Adrenal gland (tissue), 19 donors: ENCODE measurements at regions of chr20 and their contacts with region 1.

Region 1: GRCh38 chr20:2172305-2173175 is 70.9 kb downstream of the STK35 start:
- DNase-seq: peak; percentile 62 to 91 (median 78)
- H3K4me3 ChIP-seq: no peak overlapping the region
- H3K27ac ChIP-seq: no peak overlapping the region
- H3K4me1 ChIP-seq: no peaks in the 10 kb centered on the region
- H3K27me3 ChIP-seq: no peaks in the 10 kb centered on the region
- CTCF ChIP-seq: peak; percentile 77 to 96 (median 90)
- POLR2A ChIP-seq: no peak

Region 2: DNA sequence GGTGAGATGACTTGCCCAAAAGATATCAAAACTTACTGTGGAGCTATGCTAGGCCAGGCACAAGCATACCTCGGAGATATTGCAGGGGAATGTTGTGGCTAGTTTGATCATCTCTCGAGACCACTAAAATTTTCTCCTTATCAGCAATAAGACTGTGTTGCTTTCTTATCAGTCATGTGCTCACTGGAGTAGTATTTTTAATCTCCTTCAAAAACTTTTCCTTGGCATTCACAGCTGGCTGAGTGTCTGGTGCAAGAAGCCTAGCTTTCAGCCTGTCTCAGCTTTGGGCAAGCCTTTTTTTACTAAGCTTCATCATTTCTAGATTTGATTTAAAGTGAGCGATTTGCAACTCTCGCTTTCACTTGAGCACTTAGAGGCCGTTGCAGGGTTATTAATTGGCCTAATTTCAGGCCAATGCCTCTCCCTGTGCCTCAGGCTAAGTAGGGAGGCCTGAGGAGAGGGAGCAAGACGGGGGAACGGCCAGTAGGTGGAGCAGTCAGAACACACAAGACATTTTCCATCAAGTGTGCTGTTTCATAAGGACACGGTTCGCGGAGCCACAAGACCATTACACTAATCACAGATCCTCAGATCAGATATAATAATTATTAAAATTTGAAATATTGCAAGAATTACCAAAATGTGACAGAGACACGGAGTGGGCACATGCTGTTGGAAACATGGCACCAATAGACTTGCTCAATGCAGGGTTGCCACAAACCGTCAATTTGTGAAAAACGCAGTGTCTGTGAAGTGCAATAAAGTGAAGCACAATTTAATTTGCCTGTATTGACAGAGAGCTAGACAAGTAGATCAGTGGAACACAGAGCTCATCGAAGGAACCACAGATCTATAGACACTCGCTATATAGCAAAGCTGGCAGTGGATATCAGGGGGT is 408.2 kb before region 1 on chr20:
- intact Hi-C with region 1: loop called in 1 of 2 experiments (anchors 10 kb)
- DNase-seq: peak; percentile 80 to 94 (median 86)
- H3K4me3 ChIP-seq: no peak overlapping the region
- H3K27ac ChIP-seq: no peak overlapping the region
- H3K4me1 ChIP-seq: peaks cover 0 to 7% of the 10 kb centered on the region in 2 donors
- H3K27me3 ChIP-seq: no peaks in the 10 kb centered on the region
- CTCF ChIP-seq: peak; percentile 54 to 91 (median 78)
- POLR2A ChIP-seq: no peak

Region 3: DNA sequence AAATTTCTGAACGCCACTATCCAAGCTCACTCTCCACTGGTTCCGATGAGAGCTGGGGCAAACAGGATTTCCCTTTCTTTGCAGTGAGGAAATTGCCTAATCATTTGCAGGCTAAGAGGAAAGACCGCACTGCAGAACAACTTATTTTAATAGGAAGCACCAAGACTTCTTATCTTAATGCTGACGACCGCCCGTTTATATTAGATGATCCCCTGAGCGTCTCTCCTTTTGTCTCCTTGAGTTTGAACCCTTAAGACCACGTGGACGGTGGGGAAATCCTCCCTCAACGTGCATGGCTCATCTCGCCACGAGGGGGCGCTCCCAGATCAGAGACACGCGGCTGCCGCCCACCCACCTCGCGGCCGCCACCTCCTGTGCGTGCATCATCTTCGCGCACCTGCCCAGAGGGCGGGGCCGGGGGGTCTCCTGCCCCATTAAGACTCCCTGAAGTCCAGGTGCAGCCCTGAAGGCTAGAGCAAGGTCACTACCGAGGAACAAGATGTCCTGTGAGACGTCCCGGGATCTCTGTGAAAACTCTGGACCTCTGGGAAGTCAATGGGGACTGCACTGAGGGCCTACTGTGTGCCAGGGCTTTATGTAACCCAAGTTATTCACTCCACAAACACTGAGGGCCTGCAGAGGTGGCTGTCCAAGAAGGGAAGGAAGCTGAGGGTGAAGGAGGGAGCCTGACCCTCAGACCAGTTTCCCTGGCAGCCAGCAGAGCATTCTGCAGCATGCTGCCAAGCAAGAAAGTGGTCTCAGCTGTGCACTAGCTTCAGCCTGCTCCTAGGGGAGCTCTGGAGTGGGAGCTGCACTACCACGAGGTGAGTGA is 206.8 kb before region 1 on chr20:
- intact Hi-C with region 1: loop called (anchors 5 kb)
- DNase-seq: peak; percentile 65 to 91 (median 77)
- H3K4me3 ChIP-seq: peak overlapping the region in 1 of 4 donors; percentile 9
- H3K27ac ChIP-seq: no peak overlapping the region
- H3K4me1 ChIP-seq: peaks cover 0 to 17% of the 10 kb centered on the region in 2 donors
- H3K27me3 ChIP-seq: no peaks in the 10 kb centered on the region
- CTCF ChIP-seq: peak; percentile 84 to 93 (median 89)
- POLR2A ChIP-seq: no peak

Region 4: GRCh38 chr20:2005831-2006426 is 166.6 kb before region 1 on chr20:
- intact Hi-C with region 1: loop called in 1 of 2 experiments (anchors 5 kb)
- DNase-seq: peak; percentile 63 to 83 (median 74)
- H3K4me3 ChIP-seq: no peak overlapping the region
- H3K27ac ChIP-seq: no peak overlapping the region
- H3K4me1 ChIP-seq: peaks cover 0 to 10% of the 10 kb centered on the region in 2 donors
- H3K27me3 ChIP-seq: no peaks in the 10 kb centered on the region
- CTCF ChIP-seq: no peak
- POLR2A ChIP-seq: no peak

Region 5: GRCh38 chr20:2086177-2086979 is 86.2 kb before region 1 on chr20:
- intact Hi-C with region 1: loop called (anchors 5 kb)
- DNase-seq: peak in 3 of 7 donors; percentile 23 to 28 (median 24)
- H3K4me3 ChIP-seq: no peak overlapping the region
- H3K27ac ChIP-seq: no peak overlapping the region
- H3K4me1 ChIP-seq: no peaks in the 10 kb centered on the region
- H3K27me3 ChIP-seq: no peaks in the 10 kb centered on the region
- CTCF ChIP-seq: peak; percentile 7 to 47 (median 30)
- POLR2A ChIP-seq: no peak

Region 6: DNA sequence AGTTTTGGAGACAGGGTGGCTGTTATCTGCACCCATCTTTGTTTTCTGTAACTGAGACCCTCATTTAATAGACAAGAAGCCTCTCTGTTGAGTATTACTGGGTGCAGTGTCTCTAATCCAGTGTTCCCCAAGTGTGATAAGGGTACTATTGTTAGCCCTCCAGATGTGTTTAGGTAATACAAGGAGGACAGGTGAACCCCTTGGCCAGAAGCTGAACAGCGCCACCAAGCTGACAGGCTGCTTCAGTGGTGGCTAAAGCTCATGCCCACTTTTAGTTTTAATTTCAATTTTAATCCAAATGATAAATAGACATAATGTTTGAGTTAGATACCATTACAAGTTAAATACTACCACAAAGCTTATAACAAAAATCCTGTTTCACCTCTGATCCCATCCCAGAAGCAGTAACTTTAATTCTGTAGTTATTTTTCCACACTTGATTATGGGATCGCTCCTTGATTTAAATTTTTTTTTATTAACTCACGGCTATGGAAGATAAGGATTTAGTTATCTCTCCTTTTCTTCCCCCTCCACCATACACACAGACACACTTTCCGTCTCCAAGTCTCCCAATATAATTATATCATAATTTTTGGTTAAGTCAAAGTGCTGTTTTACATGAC is 79.3 kb before region 1 on chr20:
- intact Hi-C with region 1: loop called (anchors 5 kb)
- DNase-seq: no peak
- H3K4me3 ChIP-seq: no peak overlapping the region
- H3K27ac ChIP-seq: no peak overlapping the region
- H3K4me1 ChIP-seq: no peaks in the 10 kb centered on the region
- H3K27me3 ChIP-seq: no peaks in the 10 kb centered on the region
- CTCF ChIP-seq: peak in 5 of 6 experiments; percentile 15 to 50 (median 32)
- POLR2A ChIP-seq: no peak

Region 7: GRCh38 chr20:2283706-2284423 is 111.3 kb after region 1 on chr20:
- intact Hi-C with region 1: no loop called
- DNase-seq: no peak
- H3K4me3 ChIP-seq: no peak overlapping the region
- H3K27ac ChIP-seq: no peak overlapping the region
- H3K4me1 ChIP-seq: peaks cover 0 to 5% of the 10 kb centered on the region in 2 donors
- H3K27me3 ChIP-seq: no peaks in the 10 kb centered on the region
- CTCF ChIP-seq: no peak
- POLR2A ChIP-seq: no peak

Region 8: GRCh38 chr20:2946988-2947961 is 774.7 kb after region 1 on chr20:
- intact Hi-C with region 1: no loop called
- DNase-seq: peak in 2 of 7 donors; percentile 15 to 24
- H3K4me3 ChIP-seq: no peak overlapping the region
- H3K27ac ChIP-seq: no peak overlapping the region
- H3K4me1 ChIP-seq: peaks cover 0 to 9% of the 10 kb centered on the region in 2 donors
- H3K27me3 ChIP-seq: no peaks in the 10 kb centered on the region
- CTCF ChIP-seq: no peak
- POLR2A ChIP-seq: no peak